HepG2 (cell line): ENCODE measurements at regions of chr2 and their contacts with region 1.

Region 1: GRCh38 chr2:216013080-216013909 is at the start of gene MREG:
- DNase-seq: peak; percentile 77
- ATAC-seq: peak; percentile 88
- H3K4me3 ChIP-seq: peak within 1 kb of the TSS; percentile 95 to 98 (median 97)
- H3K27ac ChIP-seq: peak within 1 kb of the TSS; percentile 47
- H3K4me1 ChIP-seq: peaks cover 15% of the 10 kb centered on the region
- H3K27me3 ChIP-seq: no peaks in the 10 kb centered on the region
- CTCF ChIP-seq: peak; percentile 77
- EP300 ChIP-seq: no peak
- POLR2A ChIP-seq: no peak
- RAD21 ChIP-seq: peak; percentile 55; the same call in 1 of the 2 replicates
- total RNA-seq, gene MREG: 23.3 and 26.4 TPM in 2 replicates

Region 2: DNA sequence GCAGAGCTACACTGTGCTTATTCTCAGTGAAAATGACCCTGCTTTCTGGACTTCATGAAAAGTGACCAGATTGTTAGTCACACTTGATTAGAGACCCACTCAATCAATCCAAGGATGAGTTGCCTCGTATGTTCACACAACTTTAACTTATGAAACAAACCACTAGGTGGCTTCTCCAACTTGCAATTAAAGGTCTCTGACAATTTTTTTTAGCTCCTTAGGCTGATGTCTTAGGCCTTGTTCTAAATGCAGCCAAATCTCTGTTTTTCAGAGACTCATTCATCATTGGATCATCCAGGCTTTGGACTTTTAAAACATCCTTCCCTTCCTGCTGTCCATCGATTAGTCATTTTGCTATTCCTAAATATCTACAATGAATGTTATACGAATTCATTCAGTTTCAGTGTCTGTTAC is 63.3 kb before region 1 on chr2:
- CTCF ChIA-PET with region 1: interaction called, 12 read pairs
- POLR2A ChIA-PET with region 1: no interaction called
- in situ Hi-C with region 1: loop called (anchors 5 kb)
- intact Hi-C with region 1: loop called (anchors 1 kb)
- DNase-seq: peak; percentile 55
- ATAC-seq: peak; percentile 73
- H3K4me3 ChIP-seq: no peak overlapping the region
- H3K27ac ChIP-seq: no peak overlapping the region
- H3K4me1 ChIP-seq: peaks cover 24% of the 10 kb centered on the region
- H3K27me3 ChIP-seq: no peaks in the 10 kb centered on the region
- CTCF ChIP-seq: peak; percentile 59
- EP300 ChIP-seq: no peak
- POLR2A ChIP-seq: no peak
- RAD21 ChIP-seq: no peak; the same call in 1 of the 2 replicates

Region 3: DNA sequence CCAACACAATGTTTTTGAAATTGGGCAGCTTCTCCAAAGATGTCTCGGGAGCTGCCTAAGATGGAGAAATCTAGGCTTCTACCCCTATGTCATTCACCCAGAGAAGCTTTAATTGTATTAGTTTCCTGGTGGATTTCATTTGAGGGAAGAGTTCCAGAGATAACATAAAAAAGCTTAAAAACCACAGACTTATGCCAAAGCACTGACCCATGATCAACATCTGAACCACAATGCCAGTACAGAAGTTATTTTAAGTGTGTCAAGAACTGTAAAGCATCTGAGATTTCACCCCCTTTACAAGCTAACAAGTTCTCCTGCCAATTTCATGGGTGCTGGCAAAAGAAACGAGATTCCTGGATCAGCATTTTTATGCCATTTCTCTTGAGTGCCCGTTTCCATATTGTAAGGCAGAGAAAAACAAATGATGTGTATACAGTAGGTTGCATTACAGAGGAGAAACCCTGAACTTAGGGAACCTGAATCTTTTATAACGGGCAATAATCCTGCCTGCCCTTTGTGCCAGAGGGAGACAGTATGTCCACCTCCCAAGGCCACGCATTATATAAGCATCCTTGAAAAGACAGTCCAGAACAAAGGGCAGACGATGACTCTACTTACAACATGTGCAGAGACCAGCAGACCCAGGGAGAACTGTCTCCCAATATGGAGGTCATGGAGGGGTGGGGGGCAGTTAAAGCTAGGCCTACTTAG is 44.0 kb before region 1 on chr2:
- CTCF ChIA-PET with region 1: no interaction called
- POLR2A ChIA-PET with region 1: no interaction called
- in situ Hi-C with region 1: no loop called
- intact Hi-C with region 1: loop called (anchors 5 kb)
- DNase-seq: no peak
- ATAC-seq: no peak
- H3K4me3 ChIP-seq: no peak overlapping the region
- H3K27ac ChIP-seq: no peak overlapping the region
- H3K4me1 ChIP-seq: peaks cover 17% of the 10 kb centered on the region; the same call in 1 of the 2 replicates
- H3K27me3 ChIP-seq: no peaks in the 10 kb centered on the region
- CTCF ChIP-seq: no peak
- EP300 ChIP-seq: no peak
- POLR2A ChIP-seq: no peak
- RAD21 ChIP-seq: no peak

Region 4: DNA sequence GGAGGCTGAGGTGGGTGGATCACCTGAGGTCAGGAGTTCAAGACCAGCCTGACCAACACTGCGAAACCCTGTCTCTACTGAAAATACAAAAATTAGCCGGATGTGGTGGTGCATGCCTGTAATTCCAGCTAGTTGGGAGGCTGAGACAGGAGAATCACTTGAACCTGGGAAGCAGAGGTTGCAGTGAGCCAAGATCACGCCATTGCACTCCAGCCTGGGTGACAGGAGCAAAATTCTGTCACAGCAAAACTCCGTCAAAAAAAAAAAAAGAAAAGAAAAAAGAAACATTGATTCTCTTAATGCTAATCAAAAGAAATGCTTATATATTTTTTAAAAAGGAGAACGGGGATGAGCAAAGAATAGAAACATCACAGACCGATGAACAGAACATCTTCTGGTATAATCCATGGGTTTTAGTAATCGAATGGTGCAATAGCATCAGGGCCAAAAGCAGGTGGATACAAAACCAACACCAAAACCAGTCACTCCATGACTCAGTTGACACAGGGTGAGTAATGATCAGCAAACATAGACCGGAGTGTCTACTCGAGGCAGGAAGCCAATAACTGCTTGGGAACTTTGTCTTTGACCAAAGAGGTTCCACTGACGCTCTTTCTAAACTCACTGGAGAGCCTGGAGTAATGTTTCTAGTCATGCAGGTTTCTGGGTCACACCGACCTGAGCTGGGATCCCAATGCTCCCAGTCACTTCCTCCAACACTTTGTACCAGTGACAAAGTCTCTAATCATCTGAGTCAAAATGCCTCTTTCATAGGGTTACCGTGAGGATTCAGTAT is 31.0 kb before region 1 on chr2:
- CTCF ChIA-PET with region 1: no interaction called
- POLR2A ChIA-PET with region 1: no interaction called
- in situ Hi-C with region 1: no loop called
- intact Hi-C with region 1: loop called (anchors 2 kb)
- DNase-seq: peak; percentile 97
- ATAC-seq: peak; percentile 97
- H3K4me3 ChIP-seq: no peak overlapping the region
- H3K27ac ChIP-seq: peak overlapping the region; percentile 60
- H3K4me1 ChIP-seq: peaks cover 32% of the 10 kb centered on the region
- H3K27me3 ChIP-seq: no peaks in the 10 kb centered on the region
- CTCF ChIP-seq: no peak
- EP300 ChIP-seq: peak in 1 of 2 experiments; percentile 80; a peak in 2 of 4 replicates
- POLR2A ChIP-seq: no peak
- RAD21 ChIP-seq: no peak

Region 5: DNA sequence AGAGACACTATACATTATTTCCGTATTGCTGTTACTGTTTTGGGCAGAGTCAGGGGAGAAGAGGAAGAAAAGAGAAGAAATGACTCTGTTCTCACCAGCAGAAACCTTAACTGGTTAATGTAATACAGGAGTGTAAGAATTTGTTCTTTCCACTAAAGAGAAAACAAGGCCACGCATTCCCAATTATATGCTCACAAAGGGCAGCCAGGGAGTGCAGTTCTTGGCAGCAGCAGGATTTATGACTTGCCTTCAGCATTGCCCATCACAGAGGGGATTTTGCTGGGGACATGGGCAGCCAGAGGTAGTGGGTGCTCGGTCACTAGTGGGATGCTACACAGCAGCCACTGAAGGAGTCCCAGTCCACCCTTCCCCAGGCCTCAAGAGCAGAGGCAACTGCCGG is 18.4 kb before region 1 on chr2:
- CTCF ChIA-PET with region 1: no interaction called
- POLR2A ChIA-PET with region 1: no interaction called
- in situ Hi-C with region 1: no loop called
- intact Hi-C with region 1: no loop called
- DNase-seq: no peak
- ATAC-seq: no peak
- H3K4me3 ChIP-seq: no peak overlapping the region
- H3K27ac ChIP-seq: no peak overlapping the region
- H3K4me1 ChIP-seq: 0 out of 2 replicates have a peak, but pooled peaks cover 6% of the 10 kb centered on the region
- H3K27me3 ChIP-seq: no peaks in the 10 kb centered on the region
- CTCF ChIP-seq: no peak
- EP300 ChIP-seq: no peak
- POLR2A ChIP-seq: no peak
- RAD21 ChIP-seq: no peak

Region 6: GRCh38 chr2:216034065-216034464 is 20.8 kb after region 1 on chr2:
- CTCF ChIA-PET with region 1: no interaction called
- POLR2A ChIA-PET with region 1: no interaction called
- in situ Hi-C with region 1: no loop called
- intact Hi-C with region 1: no loop called
- DNase-seq: peak; percentile 67
- ATAC-seq: peak; percentile 82
- H3K4me3 ChIP-seq: no peak overlapping the region
- H3K27ac ChIP-seq: no peak overlapping the region
- H3K4me1 ChIP-seq: no peaks in the 10 kb centered on the region
- H3K27me3 ChIP-seq: no peaks in the 10 kb centered on the region
- CTCF ChIP-seq: peak; percentile 86
- EP300 ChIP-seq: no peak
- POLR2A ChIP-seq: no peak
- RAD21 ChIP-seq: peak; percentile 41; the same call in 1 of the 2 replicates

Region 7: DNA sequence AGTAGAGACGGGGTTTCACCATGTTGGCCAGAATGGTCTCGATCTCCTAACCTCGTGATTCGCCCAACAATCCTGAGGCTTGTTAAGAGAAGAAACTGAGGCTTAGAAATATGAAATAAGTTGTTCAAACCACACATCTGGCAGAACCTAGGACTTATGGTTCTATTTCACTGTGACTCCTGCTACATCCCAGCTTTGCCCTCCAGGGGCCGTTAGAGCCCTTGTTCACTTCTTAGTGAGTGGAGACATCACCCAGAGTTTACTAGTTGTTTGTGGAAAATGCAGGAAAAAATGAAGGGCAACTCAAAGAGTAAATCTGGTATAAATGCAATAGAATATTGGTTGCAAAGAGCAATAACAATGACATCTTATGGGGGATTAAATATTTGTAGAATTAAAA is 315.1 kb after region 1 on chr2:
- CTCF ChIA-PET with region 1: no interaction called
- POLR2A ChIA-PET with region 1: no interaction called
- in situ Hi-C with region 1: no loop called
- intact Hi-C with region 1: no loop called
- DNase-seq: peak; percentile 25
- ATAC-seq: peak; percentile 90
- H3K4me3 ChIP-seq: no peak overlapping the region
- H3K27ac ChIP-seq: no peak overlapping the region
- H3K4me1 ChIP-seq: no peaks in the 10 kb centered on the region
- H3K27me3 ChIP-seq: peaks cover 0 to 5% of the 10 kb centered on the region in 2 experiments; a peak in 2 of 5 replicates
- CTCF ChIP-seq: peak; percentile 50
- EP300 ChIP-seq: no peak
- POLR2A ChIP-seq: no peak
- RAD21 ChIP-seq: no peak